ENCODE measurements at regions of chr14 and their contacts with region 1.

Region 1: DNA sequence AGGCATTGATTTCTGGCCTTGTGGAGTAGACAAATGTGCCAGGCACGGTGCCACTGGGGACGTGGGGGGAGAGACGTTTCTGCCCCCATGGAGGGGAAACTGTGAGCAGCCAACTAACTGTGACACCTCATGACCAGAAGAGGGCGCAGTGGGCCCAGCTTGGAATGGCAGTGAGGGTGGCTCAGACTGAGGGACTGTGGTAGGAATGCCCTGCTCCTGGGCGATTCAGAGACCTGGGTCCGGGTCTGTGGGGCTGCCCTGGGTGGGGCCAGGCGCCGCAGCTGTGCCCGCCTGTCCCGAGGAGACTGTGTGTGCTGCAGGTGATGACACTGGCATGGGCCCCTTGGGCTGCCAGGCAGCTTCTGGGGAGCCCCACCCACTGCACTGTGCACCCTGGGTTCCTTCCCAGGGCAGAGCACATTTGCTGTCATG is 60.6 kb downstream of the SLC25A47 start:
- DNase-seq: peak in 1 of 2 donors; percentile 36
- ATAC-seq: peak; percentile 54 to 77
- H3K4me3 ChIP-seq: no peak overlapping the region
- H3K27ac ChIP-seq: no peak overlapping the region
- H3K4me1 ChIP-seq: peaks cover 5 to 18% of the 10 kb centered on the region in 2 donors
- H3K27me3 ChIP-seq: no peaks in the 10 kb centered on the region
- CTCF ChIP-seq: peak; percentile 44 to 81 (median 66)
- POLR2A ChIP-seq: no peak

Region 2: GRCh38 chr14:100645192-100645990 is 261.6 kb after region 1 on chr14:
- in situ Hi-C with region 1: loop called in 2 of 4 experiments (anchors 10 kb)
- intact Hi-C with region 1: loop called (anchors 5 kb)
- DNase-seq: peak; percentile 52 to 62
- ATAC-seq: peak; percentile 79 to 82
- H3K4me3 ChIP-seq: no peak overlapping the region
- H3K27ac ChIP-seq: no peak overlapping the region
- H3K4me1 ChIP-seq: no peaks in the 10 kb centered on the region
- H3K27me3 ChIP-seq: no peaks in the 10 kb centered on the region
- CTCF ChIP-seq: peak; percentile 51 to 74 (median 71)
- POLR2A ChIP-seq: no peak

Region 3: DNA sequence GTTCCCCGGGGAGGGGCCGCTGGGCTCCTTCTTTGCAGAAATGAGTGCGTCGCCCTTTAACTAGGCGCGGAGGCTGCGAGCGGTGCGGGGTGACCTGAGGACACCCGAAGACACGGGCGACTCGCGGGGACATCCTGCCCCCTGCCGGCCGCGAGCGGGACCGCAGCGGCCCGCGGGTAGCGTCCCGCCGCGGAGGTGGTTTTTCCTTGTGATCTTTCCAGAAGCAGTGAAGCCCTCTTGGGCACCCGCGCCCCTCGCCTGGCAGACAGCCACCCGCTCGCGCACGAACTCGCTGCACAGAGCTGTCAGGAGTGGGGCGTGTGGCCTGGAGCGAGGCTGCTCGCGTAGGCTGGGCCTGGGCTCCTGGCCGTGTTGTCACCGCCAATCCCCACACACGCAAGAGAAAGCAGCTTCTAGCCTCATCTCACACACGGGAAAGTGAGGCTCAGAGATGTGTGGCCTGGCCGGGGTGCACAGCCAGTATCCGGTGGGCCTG is 1244.8 kb after region 1 on chr14:
- in situ Hi-C with region 1: no loop called
- intact Hi-C with region 1: loop called (anchors 2 kb)
- DNase-seq: peak; percentile 41 to 62
- ATAC-seq: peak; percentile 74 to 93
- H3K4me3 ChIP-seq: peak overlapping the region; percentile 23 to 48 (median 40)
- H3K27ac ChIP-seq: no peak overlapping the region
- H3K4me1 ChIP-seq: peaks cover 6 to 8% of the 10 kb centered on the region in 2 donors
- H3K27me3 ChIP-seq: no peaks in the 10 kb centered on the region
- CTCF ChIP-seq: peak; percentile 90 to 99 (median 95)
- POLR2A ChIP-seq: no peak

Measured in gastrocnemius medialis (tissue), 4 donors.